Activated naive CD8-positive, alpha-beta T cell treated with anti-CD3 and anti-CD28 coated beads, Interleukin-2, amount 10 ng/mL, durations not matched to agents 7 days and 5 days (primary cell): ENCODE measurements at regions of chr4 and their contacts with region 1.

Region 1: DNA sequence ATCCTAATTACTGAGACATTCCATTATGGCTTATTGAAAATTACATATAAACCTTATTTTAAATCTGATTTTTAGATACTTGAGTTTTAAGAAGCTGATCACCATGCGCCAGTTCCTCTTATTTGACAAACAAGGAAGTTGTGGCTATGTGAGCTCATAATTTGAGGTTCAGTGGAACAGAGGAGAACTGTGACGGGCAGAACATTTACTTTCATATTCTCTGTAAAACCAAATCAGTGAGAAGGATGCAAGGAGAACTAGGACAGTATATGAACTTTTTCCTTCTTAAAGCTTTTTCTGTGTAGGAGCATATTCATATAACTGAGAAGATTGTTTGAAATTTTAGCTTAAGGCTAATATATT is 25.3 kb downstream of the STIM2 start:
- DNase-seq: no peak
- ATAC-seq: peak; percentile 55
- H3K4me3 Mint-ChIP-seq: peak overlapping the region; percentile 80
- H3K27ac Mint-ChIP-seq: peak overlapping the region; percentile 96
- H3K4me1 Mint-ChIP-seq: peaks cover 52% of the 10 kb centered on the region
- H3K27me3 Mint-ChIP-seq: no peaks in the 10 kb centered on the region

Region 2: DNA sequence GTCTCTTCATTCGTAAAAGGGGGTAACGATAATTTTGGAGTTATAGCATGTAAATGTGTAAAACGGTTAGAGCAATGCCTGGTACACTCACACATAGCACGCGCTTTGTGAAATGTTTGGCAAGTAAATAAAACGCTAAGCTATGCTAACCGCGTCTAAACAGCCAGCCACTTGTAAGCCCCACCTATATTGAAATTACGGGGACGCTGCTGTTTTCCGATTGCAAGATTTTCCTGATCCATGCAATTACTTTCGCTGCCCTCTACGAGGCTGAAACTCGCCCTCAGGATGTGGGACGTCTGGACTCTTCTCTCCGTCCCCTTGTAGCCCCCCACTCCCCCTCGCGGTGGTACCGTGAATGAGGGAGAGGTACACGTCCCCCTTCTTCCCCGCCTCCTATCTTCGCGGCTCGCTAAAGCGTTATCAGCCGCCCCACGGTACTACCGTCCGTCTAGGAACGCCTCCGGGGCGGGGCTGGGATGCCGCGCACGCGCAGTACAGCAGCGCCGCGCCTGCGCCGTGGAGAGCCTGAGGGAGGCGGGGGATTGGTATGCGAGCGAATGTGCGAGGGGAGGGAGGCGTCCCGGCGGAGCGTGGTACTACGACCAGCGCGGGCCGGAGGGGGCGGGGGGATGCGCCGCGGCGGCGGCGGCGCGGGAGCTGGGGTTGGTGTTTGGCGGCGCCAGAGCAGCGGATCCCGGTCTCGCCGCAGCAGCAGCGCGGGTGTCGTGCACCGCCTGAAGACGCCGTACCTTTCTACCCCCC is 25.6 kb before region 1 on chr4 and contains the start of gene STIM2:
- POLR2A ChIA-PET with region 1: interaction called, 209 read pairs
- DNase-seq: peak; percentile 100
- ATAC-seq: peak; percentile 74
- H3K4me3 Mint-ChIP-seq: peak within 1 kb of the TSS; percentile 98
- H3K27ac Mint-ChIP-seq: peak within 1 kb of the TSS; percentile 96
- H3K4me1 Mint-ChIP-seq: peaks cover 38% of the 10 kb centered on the region
- H3K27me3 Mint-ChIP-seq: no peaks in the 10 kb centered on the region
- total RNA-seq, gene STIM2: 70.2 to 75.2 TPM

Region 3: DNA sequence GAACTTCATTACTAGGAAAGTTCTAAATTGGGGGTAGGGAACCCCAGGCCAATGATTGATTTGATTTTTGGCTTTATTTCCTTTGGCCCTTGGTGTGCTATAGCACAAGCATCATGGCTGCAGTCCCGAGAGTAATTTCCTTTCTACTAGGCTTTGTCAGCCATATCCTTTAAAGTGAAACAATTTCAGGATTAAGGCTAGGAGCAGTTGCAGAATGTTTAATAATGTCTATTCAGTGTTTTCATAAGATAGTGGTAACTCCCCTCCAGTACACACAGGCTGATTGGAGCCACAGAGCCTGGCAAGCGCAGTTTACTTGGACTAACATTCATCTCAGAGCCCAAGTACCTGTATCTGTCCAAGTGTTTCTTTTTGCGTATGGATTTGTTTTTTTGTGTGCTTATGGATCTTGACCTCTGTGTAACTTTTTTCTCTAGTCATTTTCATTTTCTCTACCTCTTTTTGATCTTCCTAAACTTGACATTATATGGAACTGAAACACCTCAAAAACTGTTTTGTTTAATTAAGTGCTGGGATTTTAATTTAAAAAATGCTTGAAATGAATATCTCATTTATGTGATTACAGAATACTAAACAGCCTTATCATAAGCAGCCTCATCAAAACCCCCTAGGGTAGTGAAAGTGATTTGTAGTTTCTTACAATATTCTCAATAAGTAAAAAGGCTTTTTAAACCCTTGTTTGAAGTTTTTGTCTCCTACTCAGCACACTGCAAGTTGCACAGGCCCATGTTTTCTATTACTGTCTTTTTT is 17.8 kb before region 1 on chr4:
- POLR2A ChIA-PET with region 1: interaction called, 14 read pairs
- DNase-seq: no peak
- ATAC-seq: no peak
- H3K4me3 Mint-ChIP-seq: peak overlapping the region; percentile 56
- H3K27ac Mint-ChIP-seq: peak overlapping the region; percentile 49
- H3K4me1 Mint-ChIP-seq: peaks cover 65% of the 10 kb centered on the region
- H3K27me3 Mint-ChIP-seq: no peaks in the 10 kb centered on the region

Region 4: GRCh38 chr4:26873391-26874026 is 12.4 kb before region 1 on chr4:
- POLR2A ChIA-PET with region 1: interaction called, 13 read pairs
- DNase-seq: peak; percentile 47
- ATAC-seq: peak; percentile 90
- H3K4me3 Mint-ChIP-seq: peak overlapping the region; percentile 74
- H3K27ac Mint-ChIP-seq: peak overlapping the region; percentile 91
- H3K4me1 Mint-ChIP-seq: peaks cover 56% of the 10 kb centered on the region
- H3K27me3 Mint-ChIP-seq: no peaks in the 10 kb centered on the region